Panc1 (cell line): ENCODE measurements at regions of chr13 and their contacts with region 1.

Region 1: DNA sequence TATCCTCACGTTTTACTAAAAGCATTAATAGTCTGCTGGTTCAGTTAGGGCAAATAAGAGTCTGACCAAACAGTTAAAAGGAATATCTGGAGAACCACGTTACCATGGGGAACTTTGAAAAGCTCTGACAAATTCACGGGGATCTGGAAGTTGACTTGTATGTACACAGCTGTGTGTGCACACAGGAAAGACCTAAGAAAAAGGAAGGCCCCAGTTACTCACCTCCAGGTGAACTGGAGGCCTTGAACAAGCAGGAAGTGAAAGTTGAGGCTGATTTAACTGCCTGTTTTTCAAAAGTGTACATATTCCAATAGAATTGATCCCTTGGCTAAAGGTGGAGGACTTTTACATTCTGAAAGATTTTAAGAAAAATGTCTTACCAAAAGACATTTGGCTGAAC is 1891.6 kb upstream of the PCDH20 start:
- DNase-seq: no peak
- ATAC-seq: no peak
- H3K4me3 ChIP-seq: no peak overlapping the region
- H3K27ac ChIP-seq: no peak overlapping the region
- H3K4me1 ChIP-seq: no peaks in the 10 kb centered on the region
- H3K27me3 ChIP-seq: no peaks in the 10 kb centered on the region
- CTCF ChIP-seq: no peak

Region 2: DNA sequence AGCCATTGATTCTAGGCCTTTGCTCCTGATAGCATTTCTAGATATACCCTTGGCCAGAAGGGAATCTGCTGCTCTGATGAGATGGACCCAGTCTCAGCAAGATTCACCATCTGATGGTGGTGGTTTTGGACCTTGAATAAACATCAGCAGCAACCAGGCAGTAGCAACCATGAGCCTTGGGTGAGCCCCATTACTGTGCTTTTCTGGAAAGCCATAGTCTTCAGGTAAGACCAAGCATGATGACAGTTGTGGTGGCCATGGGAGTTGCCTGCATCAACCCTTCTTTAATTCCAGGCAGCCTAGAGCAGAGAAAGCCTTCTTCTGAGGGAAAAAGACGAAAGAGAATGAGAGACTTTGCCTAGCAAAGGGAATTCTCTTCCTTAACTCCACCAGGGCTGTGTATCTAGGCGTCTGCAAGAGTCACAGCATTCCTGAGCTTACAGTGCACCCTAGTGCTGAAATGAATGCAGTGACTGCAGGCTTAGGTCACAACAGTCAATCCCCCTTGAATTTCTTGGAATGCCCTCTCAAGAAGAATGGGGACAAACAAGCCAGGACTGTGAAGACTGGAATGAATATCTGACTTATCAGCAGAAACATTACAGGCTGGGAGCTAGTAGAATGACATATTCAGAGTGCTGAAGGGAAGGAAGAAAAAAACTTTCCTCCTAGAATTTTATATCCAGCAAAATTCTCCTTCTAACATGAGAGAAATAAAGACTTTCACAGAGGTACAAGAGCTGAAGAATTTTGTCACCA is 949.2 kb before region 1 on chr13:
- CTCF ChIA-PET with region 1: no interaction called
- POLR2A ChIA-PET with region 1: no interaction called
- in situ Hi-C with region 1: no loop called
- intact Hi-C with region 1: no loop called
- DNase-seq: peak; percentile 32
- ATAC-seq: peak; percentile 77; the same call in 1 of the 2 replicates
- H3K4me3 ChIP-seq: no peak overlapping the region
- H3K27ac ChIP-seq: no peak overlapping the region
- H3K4me1 ChIP-seq: no peaks in the 10 kb centered on the region
- H3K27me3 ChIP-seq: no peaks in the 10 kb centered on the region
- CTCF ChIP-seq: peak; percentile 62

Region 3: DNA sequence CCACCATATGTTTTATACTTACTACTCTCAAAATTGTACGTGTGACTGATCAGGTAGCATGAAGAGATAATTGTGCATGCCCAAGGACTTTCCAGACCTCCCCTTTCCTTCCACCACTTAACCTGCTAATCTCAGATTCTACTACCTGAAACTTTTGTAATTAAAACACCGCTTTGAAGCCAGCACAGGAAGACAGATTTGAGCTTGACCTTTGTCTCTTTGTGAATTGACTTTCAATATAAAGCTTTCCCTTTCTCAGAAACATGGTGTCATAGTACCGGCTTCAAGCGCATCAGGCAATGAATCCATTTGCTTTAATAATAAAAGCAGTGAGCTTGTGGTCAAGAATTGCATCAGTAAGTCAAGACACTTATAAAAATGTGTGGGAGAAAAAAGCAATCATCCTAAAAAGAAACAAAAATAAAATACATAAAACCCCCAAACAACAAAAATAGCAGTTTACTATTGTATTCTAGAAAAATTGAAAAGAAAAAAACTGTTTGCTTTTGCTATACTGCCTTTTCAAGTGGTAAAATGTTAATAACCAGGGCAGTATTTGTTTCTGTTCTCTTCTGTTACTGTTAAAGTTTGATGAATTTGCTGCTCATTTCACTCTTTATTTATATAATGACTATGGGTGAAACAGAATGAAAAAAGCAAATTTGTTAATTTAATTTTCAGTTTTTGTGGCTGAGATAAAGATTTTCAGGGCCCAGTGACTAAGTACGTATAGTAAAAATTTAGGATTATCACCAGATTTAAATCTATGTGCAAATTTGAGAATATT is 1847.6 kb after region 1 on chr13:
- CTCF ChIA-PET with region 1: no interaction called
- POLR2A ChIA-PET with region 1: interaction called, 23 read pairs
- in situ Hi-C with region 1: no loop called
- intact Hi-C with region 1: no loop called
- DNase-seq: no peak
- ATAC-seq: no peak
- H3K4me3 ChIP-seq: no peak overlapping the region
- H3K27ac ChIP-seq: no peak overlapping the region
- H3K4me1 ChIP-seq: peaks cover 6% of the 10 kb centered on the region; the same call in 1 of the 2 replicates
- H3K27me3 ChIP-seq: no peaks in the 10 kb centered on the region
- CTCF ChIP-seq: no peak